ENCODE measurements at regions of chr1 and their contacts with region 1.

Region 1: GRCh38 chr1:61453111-61453961 is 271.6 kb downstream of the TM2D1 start:
- DNase-seq: peak; percentile 91 to 95 (median 95)
- H3K4me3 ChIP-seq: peak overlapping the region in 2 of 7 experiments; percentile 8 to 31
- H3K27ac ChIP-seq: peak overlapping the region in 1 of 2 experiments; percentile 27
- H3K4me1 ChIP-seq: peaks cover 12 to 52% (median 25%) of the 10 kb centered on the region in 4 experiments
- H3K27me3 ChIP-seq: no peaks in the 10 kb centered on the region

Region 2: DNA sequence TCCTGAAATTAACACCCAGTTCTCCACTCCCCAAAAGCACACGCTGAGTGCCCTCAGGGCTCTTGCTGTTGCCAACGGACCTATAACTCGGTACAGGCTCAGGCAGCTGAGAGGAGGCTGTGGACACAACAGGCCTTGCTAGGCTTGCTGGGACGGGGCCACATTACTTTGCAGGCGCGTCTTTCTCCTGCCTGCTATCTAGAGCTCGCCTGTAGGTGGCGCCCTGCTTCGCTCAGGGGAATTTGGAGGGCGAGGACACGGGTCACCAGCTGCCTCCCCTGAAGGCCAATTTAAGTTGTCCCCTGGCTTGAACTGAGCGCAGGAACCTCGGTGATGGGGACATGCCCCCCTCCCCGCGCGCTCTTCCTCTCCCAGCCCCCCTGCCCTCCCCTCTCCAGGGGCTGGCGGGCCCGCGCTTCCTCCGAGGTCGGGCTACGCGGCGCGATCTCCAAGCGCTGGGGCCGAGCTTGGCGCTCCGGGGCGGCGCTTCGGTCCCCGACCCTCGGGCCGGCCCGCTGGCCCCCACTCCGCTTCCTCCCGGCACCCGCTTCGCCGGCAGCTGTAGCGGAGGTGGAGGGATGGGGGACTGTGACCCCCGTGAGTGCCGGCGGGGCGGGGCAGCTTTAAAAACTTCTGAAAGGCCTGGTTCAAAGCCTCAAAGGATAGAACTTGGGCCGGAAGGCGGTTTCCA is 403.3 kb before region 1 on chr1:
- CTCF ChIA-PET with region 1: interaction called, 23 read pairs
- POLR2A ChIA-PET with region 1: interaction called, 5 read pairs
- DNase-seq: peak; percentile 95 to 99 (median 98)
- H3K4me3 ChIP-seq: peak overlapping the region; percentile 55 to 91 (median 75)
- H3K27ac ChIP-seq: peak overlapping the region; percentile 58 to 81
- H3K4me1 ChIP-seq: peaks cover 14 to 46% (median 42%) of the 10 kb centered on the region in 4 experiments
- H3K27me3 ChIP-seq: peaks cover 0 to 13% (median 0%) of the 10 kb centered on the region in 5 experiments

Region 3: DNA sequence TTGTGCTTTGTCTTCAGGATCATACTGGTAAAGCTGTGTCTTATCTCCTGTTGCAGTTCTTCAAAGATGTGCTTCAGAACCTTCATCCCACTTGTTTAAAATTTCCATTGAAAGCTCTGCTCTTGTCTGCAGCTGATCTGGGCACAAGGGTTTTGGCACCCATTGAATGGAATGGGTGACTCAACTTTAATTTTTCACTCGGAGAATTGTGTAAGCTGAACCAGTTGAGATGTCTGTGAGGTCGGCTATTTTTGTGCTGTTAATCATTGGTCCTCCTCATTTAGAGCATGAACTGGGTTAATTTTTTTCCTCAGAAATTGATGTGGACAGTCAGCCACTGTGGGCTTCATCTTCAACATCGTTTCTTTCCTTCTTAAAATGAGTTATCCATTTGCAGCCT is 19.5 kb after region 1 on chr1:
- CTCF ChIA-PET with region 1: no interaction called
- POLR2A ChIA-PET with region 1: no interaction called
- DNase-seq: no peak
- H3K4me3 ChIP-seq: no peak overlapping the region
- H3K27ac ChIP-seq: no peak overlapping the region
- H3K4me1 ChIP-seq: no peaks in the 10 kb centered on the region
- H3K27me3 ChIP-seq: no peaks in the 10 kb centered on the region